CD8-positive, alpha-beta T cell (primary cell): ENCODE measurements at regions of chr11 and their contacts with region 1.

Region 1: GRCh38 chr11:75445315-75445953 is 12.4 kb upstream of the KLHL35 start:
- DNase-seq: peak; percentile 46 to 85 (median 74)
- ATAC-seq: peak; percentile 98
- H3K4me3 ChIP-seq: no peak overlapping the region
- H3K4me3 Mint-ChIP-seq: no peak overlapping the region
- H3K27ac ChIP-seq: no peak overlapping the region
- H3K27ac Mint-ChIP-seq: no peak overlapping the region
- H3K4me1 ChIP-seq: no peaks in the 10 kb centered on the region
- H3K4me1 Mint-ChIP-seq: no peaks in the 10 kb centered on the region
- H3K27me3 ChIP-seq: no peaks in the 10 kb centered on the region
- H3K27me3 Mint-ChIP-seq: no peaks in the 10 kb centered on the region
- CTCF ChIP-seq: peak; percentile 96

Region 2: GRCh38 chr11:75428281-75428724 is 17.1 kb before region 1 on chr11:
- CTCF ChIA-PET with region 1: interaction called, 14 read pairs
- POLR2A ChIA-PET with region 1: interaction called, 3 read pairs
- intact Hi-C with region 1: no loop called
- DNase-seq: peak in 8 of 9 experiments; percentile 27 to 84 (median 62)
- ATAC-seq: peak; percentile 64
- H3K4me3 ChIP-seq: peak overlapping the region; percentile 13 to 22
- H3K4me3 Mint-ChIP-seq: peak overlapping the region; percentile 61
- H3K27ac ChIP-seq: no peak overlapping the region
- H3K27ac Mint-ChIP-seq: no peak overlapping the region
- H3K4me1 ChIP-seq: peaks cover 9% of the 10 kb centered on the region
- H3K4me1 Mint-ChIP-seq: peaks cover 16% of the 10 kb centered on the region
- H3K27me3 ChIP-seq: peaks cover 11 to 13% of the 10 kb centered on the region in 2 experiments
- H3K27me3 Mint-ChIP-seq: peaks cover 34% of the 10 kb centered on the region
- CTCF ChIP-seq: no peak

Region 3: DNA sequence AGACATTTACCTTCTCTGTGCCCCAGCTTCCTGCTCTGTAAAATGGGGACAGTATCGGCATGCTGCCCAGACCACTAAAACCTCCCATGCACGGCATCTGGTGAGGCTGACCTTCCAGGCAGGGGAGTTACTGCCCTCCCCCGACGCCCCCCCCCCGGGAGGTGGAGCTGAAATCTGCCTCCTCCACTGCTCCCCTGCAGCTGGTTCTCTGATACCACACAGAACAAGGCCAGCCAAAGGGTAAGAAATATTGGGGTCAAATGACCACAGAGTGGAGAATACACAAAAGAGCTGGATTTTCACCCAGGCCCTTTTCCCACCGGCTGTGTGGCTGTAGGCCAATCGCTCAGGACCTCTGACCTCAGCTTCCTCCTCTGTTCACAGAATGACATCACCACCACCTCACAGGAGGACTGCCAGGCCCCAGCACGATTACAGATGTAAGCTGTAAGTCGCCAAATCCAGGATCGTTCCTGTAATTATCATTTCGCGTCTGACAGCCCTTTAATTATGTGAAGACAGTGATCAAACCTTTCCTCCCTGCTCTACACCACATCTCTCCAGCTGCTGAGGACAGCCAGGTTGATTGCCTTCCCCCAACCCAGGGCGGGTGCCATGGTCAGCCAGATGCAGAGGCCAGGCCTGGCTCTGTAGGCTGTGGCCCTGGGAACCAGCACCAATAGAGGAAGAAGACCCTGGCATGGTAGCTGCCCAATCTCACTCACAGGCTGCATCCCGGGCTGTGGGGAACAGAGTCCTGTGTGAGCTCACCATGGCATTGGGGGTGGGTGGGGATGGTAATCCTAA is 23.3 kb after region 1 on chr11:
- CTCF ChIA-PET with region 1: interaction called, 11 read pairs
- POLR2A ChIA-PET with region 1: no interaction called
- intact Hi-C with region 1: no loop called
- DNase-seq: no peak
- ATAC-seq: no peak
- H3K4me3 ChIP-seq: no peak overlapping the region
- H3K4me3 Mint-ChIP-seq: no peak overlapping the region
- H3K27ac ChIP-seq: no peak overlapping the region
- H3K27ac Mint-ChIP-seq: no peak overlapping the region
- H3K4me1 ChIP-seq: no peaks in the 10 kb centered on the region
- H3K4me1 Mint-ChIP-seq: no peaks in the 10 kb centered on the region
- H3K27me3 ChIP-seq: no peaks in the 10 kb centered on the region
- H3K27me3 Mint-ChIP-seq: no peaks in the 10 kb centered on the region
- CTCF ChIP-seq: no peak

Region 4: DNA sequence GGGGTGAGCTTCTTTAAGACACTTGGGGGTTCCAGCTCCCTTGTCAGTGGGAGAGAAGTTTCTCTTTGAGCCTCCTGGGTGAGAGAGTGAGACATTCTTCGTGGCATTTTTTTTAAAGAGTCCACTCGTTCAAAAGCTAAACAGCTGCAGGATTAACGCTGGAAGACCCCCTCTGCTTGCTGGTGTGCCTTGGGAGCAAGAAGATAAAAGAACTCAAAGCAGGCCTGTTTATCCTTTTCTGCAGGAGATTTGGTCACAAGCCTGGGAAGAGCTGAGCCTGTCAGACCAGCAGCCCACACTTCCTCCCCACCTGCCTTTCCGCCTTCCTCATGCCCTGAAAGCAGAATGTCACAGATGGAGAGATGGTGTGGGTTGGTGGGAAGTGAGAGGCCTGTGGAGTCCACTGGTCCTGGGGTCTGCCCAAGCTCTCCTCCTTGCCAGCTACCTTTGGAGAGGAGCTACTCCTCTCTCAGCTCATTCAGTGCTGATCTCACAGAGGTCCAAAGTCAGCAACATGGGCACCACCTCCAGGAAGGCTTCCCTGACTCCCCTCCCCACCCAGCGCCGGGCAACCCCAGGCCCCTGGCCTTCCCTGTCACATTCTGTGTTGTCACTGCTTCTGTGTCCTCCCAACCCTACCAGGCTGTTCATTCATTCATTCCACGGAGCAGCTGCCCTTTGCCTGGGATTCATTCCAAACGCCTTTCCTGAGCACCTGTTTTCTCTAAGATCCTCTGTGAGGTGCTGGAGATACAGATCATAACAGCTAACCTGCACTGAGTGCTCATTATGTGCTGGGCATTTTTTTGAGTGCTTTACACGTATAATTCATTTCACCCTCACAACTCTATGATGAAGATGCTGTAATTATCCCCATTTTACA is 73.6 kb after region 1 on chr11:
- CTCF ChIA-PET with region 1: interaction called, 390 read pairs
- POLR2A ChIA-PET with region 1: no interaction called
- intact Hi-C with region 1: no loop called
- DNase-seq: no peak
- ATAC-seq: no peak
- H3K4me3 ChIP-seq: no peak overlapping the region
- H3K4me3 Mint-ChIP-seq: no peak overlapping the region
- H3K27ac ChIP-seq: no peak overlapping the region
- H3K27ac Mint-ChIP-seq: no peak overlapping the region
- H3K4me1 ChIP-seq: peaks cover under 1% of the 10 kb centered on the region
- H3K4me1 Mint-ChIP-seq: peaks cover 21% of the 10 kb centered on the region
- H3K27me3 ChIP-seq: no peaks in the 10 kb centered on the region
- H3K27me3 Mint-ChIP-seq: no peaks in the 10 kb centered on the region
- CTCF ChIP-seq: no peak

Region 5: DNA sequence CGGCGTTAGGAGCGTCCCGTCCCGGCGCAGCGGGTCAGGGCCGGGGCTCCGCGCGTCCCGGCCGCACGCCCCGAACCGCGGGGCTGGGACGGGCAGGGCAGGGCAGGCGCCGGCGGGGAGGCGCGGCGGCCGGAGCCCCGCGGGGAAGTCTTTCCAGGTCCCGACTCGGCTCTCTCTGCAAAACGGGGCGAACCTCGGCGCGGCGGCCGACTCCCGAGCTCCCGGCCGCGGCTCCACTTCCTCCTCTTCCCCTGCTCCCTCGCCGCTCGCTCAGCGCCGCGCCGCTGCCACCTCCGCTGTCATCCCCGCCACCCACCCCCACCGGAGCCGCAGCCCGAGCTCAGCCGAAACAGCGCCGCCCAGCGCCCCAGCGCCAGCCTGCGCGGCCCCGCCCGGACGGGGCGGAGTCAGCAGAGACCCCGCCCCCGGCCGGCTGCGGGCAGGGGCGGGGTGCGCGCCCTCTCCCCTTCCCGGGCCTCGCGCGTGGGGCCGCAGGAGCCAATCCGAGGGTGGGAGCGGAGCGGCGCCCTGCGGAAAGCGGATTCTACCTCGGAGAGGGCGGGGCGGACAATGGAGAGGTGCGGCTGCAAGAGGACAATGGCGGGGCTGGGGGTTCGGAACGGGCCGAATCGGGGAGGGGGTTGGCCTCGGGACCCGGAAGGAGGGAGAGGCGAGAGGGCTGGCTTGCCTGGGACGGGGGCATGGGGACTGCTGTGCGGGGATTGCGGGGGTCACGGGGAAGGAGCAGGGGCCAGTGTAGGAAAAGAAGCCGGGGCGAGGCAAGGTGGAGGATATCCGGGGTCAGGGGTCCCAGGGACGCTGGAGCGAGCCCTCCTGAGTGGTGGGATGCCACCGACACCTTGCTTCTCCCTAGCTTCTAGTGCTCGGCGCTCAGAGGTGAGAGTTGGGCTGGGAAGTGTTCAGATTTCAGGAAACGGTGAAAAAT is 80.4 kb after region 1 on chr11 and contains the start of gene GDPD5:
- CTCF ChIA-PET with region 1: interaction called, 390 read pairs
- POLR2A ChIA-PET with region 1: no interaction called
- intact Hi-C with region 1: no loop called
- DNase-seq: peak; percentile 63 to 93 (median 84)
- ATAC-seq: peak; percentile 97
- H3K4me3 ChIP-seq: peak within 1 kb of the TSS; percentile 66 to 78
- H3K4me3 Mint-ChIP-seq: peak within 1 kb of the TSS; percentile 89
- H3K27ac ChIP-seq: no peak within 1 kb of the TSS
- H3K27ac Mint-ChIP-seq: peak within 1 kb of the TSS; percentile 46
- H3K4me1 ChIP-seq: peaks cover 12% of the 10 kb centered on the region
- H3K4me1 Mint-ChIP-seq: peaks cover 26% of the 10 kb centered on the region
- H3K27me3 ChIP-seq: peaks cover 0 to 4% of the 10 kb centered on the region in 2 experiments
- H3K27me3 Mint-ChIP-seq: no peaks in the 10 kb centered on the region
- CTCF ChIP-seq: peak; percentile 39
- total RNA-seq, gene GDPD5: 15.9 to 18.3 TPM

Region 6: DNA sequence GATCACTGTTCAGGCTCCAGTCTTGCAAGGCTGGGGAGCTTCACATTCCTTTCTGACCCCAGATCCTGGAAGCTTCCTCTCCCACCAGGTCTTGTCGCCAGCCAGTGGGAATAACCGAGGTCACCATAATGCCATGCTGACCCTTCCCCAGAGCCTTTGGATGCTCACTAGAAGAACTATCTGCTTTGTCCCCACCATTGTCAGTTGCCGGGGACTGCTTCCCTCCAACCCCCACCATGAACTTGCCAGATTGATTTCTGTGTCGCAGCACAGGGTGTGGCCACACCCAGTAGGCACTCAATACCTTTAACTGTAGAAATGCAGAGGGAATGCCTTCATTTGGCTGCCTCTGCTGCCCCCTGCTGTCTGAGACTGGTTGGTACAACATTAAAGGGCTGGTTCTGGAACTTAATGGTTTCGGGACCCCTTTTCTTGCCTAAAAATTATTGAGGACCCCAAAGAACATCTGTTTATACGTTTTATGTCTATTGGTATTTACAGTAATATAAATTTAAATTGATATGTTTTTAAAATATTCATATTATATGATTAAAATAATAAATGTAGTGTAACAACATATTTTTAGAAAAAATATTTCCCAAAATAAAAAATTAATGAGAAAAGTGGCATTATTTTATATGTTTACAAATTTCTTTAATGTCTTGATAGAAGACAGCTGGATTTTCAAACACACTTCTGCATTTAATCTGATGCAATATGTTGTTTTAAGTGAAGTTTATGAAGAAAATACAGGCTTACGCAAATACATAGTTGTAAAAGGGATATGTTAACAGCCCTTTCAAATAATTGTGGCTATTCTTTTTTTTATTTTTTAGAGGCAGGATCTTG is 87.0 kb after region 1 on chr11:
- CTCF ChIA-PET with region 1: interaction called, 390 read pairs
- POLR2A ChIA-PET with region 1: no interaction called
- intact Hi-C with region 1: loop called (anchors 1 kb)
- DNase-seq: peak; percentile 70 to 91 (median 84)
- ATAC-seq: peak; percentile 91
- H3K4me3 ChIP-seq: no peak overlapping the region
- H3K4me3 Mint-ChIP-seq: no peak overlapping the region
- H3K27ac ChIP-seq: no peak overlapping the region
- H3K27ac Mint-ChIP-seq: no peak overlapping the region
- H3K4me1 ChIP-seq: peaks cover 8% of the 10 kb centered on the region
- H3K4me1 Mint-ChIP-seq: peaks cover 31% of the 10 kb centered on the region
- H3K27me3 ChIP-seq: no peaks in the 10 kb centered on the region
- H3K27me3 Mint-ChIP-seq: no peaks in the 10 kb centered on the region
- CTCF ChIP-seq: peak; percentile 98

Region 7: DNA sequence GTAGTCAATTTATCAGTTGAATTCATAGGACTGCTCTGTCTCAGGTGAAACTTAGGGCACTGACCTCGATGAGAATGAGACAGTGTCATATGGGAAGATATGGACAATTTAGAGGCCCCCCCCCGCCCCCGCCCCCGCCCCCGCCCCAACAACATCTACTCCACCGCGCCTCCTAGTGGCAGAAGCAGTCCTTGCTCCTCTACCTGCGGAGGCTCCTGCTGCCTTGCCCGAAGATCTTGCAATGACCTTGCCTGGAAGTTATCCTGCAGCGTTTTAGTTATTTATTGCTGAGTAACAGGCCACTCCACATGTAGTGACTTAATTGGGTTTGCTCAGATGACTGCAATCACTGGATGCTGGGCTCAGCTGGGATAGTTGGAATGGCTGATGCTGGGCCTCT is 131.8 kb after region 1 on chr11:
- CTCF ChIA-PET with region 1: interaction called, 13 read pairs
- POLR2A ChIA-PET with region 1: no interaction called
- intact Hi-C with region 1: no loop called
- DNase-seq: peak; percentile 33 to 74 (median 67)
- ATAC-seq: peak; percentile 77
- H3K4me3 ChIP-seq: no peak overlapping the region
- H3K4me3 Mint-ChIP-seq: no peak overlapping the region
- H3K27ac ChIP-seq: no peak overlapping the region
- H3K27ac Mint-ChIP-seq: no peak overlapping the region
- H3K4me1 ChIP-seq: peaks cover 6% of the 10 kb centered on the region
- H3K4me1 Mint-ChIP-seq: peaks cover 7% of the 10 kb centered on the region
- H3K27me3 ChIP-seq: no peaks in the 10 kb centered on the region
- H3K27me3 Mint-ChIP-seq: no peaks in the 10 kb centered on the region
- CTCF ChIP-seq: peak; percentile 65